Heart left ventricle (tissue), 16 donors: ENCODE measurements at regions of chr6 and their contacts with region 1.

Region 1: GRCh38 chr6:73129653-73130443 is 95.4 kb downstream of the KHDC1L start:
- DNase-seq: peak; percentile 45 to 82 (median 59)
- ATAC-seq: peak in 3 of 4 donors; percentile 56 to 70 (median 69)
- H3K4me3 ChIP-seq: no peak overlapping the region
- H3K27ac ChIP-seq: no peak overlapping the region
- H3K4me1 ChIP-seq: no peaks in the 10 kb centered on the region
- H3K27me3 ChIP-seq: peaks cover 0 to 9% (median 0%) of the 10 kb centered on the region in 9 donors
- CTCF ChIP-seq: peak; percentile 46 to 89 (median 66)
- POLR2A ChIP-seq: no peak

Region 2: DNA sequence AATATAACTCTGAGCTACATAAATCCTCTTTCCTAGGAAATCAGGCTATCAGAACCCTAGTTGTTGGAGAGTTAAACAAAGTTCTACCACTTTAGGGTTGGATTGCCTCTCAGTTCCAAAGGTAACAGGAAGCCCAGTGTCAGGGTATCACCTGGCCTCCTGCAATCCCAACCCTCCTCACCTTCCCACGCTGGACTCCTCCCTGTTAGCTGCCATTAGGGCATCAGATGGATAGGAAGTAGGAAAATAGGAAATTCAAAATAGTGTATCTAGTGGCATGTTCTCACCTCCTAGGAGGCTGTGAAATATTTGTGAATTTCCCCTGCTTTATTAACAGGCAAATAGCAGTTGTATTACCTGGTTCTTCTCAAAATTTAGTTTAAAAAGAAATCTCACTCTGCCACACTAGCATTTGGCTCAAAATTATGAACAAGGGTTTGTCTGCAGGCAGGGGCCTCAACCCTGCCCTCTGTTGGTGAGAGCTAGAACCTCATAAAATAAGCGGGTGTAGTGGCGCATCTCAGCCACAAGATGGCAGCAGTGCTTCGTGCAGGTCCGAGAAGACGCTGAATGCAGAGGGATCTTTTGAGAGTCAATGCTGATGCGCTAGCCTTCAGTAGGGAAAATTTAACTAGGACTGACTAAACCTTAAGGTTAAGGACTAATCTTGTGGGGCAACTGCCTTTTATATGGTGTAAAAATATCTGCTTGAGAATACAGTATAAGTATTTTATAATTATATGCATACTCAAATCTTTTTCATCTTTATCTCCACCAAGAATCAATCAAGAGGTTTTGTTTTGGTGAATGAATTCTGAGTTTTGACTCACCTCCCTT is 717.8 kb before region 1 on chr6:
- intact Hi-C with region 1: loop called in 7 of 10 experiments (anchors 5 to 10 kb)
- DNase-seq: peak; percentile 37 to 73 (median 59)
- ATAC-seq: peak in 3 of 4 donors; percentile 68 to 87 (median 80)
- H3K4me3 ChIP-seq: no peak overlapping the region
- H3K27ac ChIP-seq: no peak overlapping the region
- H3K4me1 ChIP-seq: no peaks in the 10 kb centered on the region
- H3K27me3 ChIP-seq: peaks cover 0 to 21% (median 6%) of the 10 kb centered on the region in 9 donors
- CTCF ChIP-seq: peak; percentile 100
- POLR2A ChIP-seq: no peak

Region 3: GRCh38 chr6:72622094-72622940 is 507.5 kb before region 1 on chr6:
- intact Hi-C with region 1: loop called in 7 of 10 experiments (anchors 5 to 10 kb)
- DNase-seq: peak in 4 of 5 donors; percentile 6 to 70 (median 20)
- ATAC-seq: peak in 3 of 4 donors; percentile 16 to 49 (median 18)
- H3K4me3 ChIP-seq: peak overlapping the region; percentile 9 to 61 (median 46)
- H3K27ac ChIP-seq: no peak overlapping the region
- H3K4me1 ChIP-seq: peaks cover 0 to 39% (median 19%) of the 10 kb centered on the region in 12 donors
- H3K27me3 ChIP-seq: peaks cover 17 to 68% (median 34%) of the 10 kb centered on the region in 9 donors
- CTCF ChIP-seq: peak in 1 of 12 donors; percentile 7
- POLR2A ChIP-seq: no peak

Region 4: DNA sequence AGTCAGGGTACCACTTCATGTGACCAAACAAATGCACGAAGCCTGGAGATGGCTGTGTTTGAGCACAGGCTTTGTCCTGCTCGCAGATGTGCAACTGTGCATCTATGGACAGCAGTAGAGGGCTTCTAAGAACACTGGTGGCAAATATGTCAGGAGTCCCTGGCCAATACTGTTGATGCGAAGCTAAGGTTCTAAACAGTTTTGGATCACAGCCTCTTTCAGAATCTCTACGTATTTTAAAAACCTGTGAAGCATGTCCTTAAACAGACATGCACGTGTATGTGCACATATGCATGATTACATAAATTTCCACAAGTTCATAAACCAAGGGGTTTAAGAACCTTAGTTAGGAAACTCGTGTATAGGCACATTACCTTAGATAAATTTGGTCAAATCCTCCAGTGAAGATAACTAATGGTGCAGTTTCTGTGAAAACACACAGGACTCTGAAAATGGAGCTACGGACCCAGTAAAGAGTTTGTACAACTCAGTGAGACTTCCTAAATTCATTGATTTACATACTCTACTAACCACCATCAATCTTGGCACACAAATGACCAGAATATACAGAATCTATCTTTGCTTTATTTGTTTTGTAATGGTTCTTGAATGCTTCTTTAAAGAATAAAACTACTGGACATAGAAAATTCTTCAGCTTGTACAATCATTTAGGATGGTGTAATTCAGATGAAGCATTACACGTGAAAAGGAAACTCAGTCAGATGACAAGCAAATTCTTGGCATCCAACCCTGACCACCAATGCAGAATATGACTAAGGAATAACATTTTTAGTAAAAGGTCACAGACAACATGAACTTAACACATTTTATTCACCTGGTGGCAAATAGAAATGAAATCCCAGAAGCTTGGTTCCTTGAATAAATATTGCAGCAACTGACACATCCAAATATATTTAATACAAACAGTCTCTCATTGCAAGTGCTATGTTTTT is 480.5 kb before region 1 on chr6:
- intact Hi-C with region 1: loop called in 1 of 10 experiments (anchors 10 kb)
- DNase-seq: no peak
- ATAC-seq: no peak
- H3K4me3 ChIP-seq: no peak overlapping the region
- H3K27ac ChIP-seq: no peak overlapping the region
- H3K4me1 ChIP-seq: no peaks in the 10 kb centered on the region
- H3K27me3 ChIP-seq: no peaks in the 10 kb centered on the region
- CTCF ChIP-seq: no peak
- POLR2A ChIP-seq: no peak

Region 5: GRCh38 chr6:73180763-73181619 is 51.1 kb after region 1 on chr6:
- intact Hi-C with region 1: no loop called
- DNase-seq: no peak
- ATAC-seq: peak in 3 of 4 donors; percentile 75 to 86 (median 84)
- H3K4me3 ChIP-seq: peak overlapping the region in 8 of 12 donors; percentile 4 to 49 (median 26)
- H3K27ac ChIP-seq: no peak overlapping the region
- H3K4me1 ChIP-seq: peaks cover 0 to 5% (median 0%) of the 10 kb centered on the region in 12 donors
- H3K27me3 ChIP-seq: peaks cover 0 to 11% (median 3%) of the 10 kb centered on the region in 9 donors
- CTCF ChIP-seq: peak; percentile 56 to 83 (median 68)
- POLR2A ChIP-seq: no peak